ENCODE measurements at regions of chr9 and their contacts with region 1.

Region 1: DNA sequence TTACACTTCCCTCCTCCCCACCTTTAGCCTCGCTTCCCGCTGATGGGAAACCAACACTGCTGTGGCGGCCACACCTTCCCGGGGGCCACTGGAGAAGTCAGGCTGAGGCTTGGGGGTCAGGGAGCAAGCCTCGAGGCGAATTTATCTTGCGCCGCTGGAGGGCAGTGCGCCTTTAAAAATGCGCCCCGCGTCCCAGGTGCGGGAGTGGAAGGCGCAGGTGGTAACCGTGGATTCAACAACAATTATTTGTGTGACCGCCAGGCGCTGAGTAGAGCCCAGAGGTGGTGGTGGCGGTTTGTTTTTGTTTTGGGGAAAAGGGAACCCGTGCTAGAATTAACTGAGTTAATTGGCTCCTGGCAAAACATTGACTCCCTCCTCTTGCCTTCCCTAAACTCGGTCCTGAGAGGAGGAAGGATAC is 1.1 kb downstream of the CFAP77 start:
- DNase-seq: peak; percentile 40
- ATAC-seq: peak; percentile 25 to 31

Region 2: GRCh38 chr9:132507746-132508469 is 96.8 kb after region 1 on chr9:
- intact Hi-C with region 1: loop called in 1 of 2 experiments (anchors 10 kb)
- DNase-seq: peak; percentile 61
- ATAC-seq: peak; percentile 69 to 76

Region 3: DNA sequence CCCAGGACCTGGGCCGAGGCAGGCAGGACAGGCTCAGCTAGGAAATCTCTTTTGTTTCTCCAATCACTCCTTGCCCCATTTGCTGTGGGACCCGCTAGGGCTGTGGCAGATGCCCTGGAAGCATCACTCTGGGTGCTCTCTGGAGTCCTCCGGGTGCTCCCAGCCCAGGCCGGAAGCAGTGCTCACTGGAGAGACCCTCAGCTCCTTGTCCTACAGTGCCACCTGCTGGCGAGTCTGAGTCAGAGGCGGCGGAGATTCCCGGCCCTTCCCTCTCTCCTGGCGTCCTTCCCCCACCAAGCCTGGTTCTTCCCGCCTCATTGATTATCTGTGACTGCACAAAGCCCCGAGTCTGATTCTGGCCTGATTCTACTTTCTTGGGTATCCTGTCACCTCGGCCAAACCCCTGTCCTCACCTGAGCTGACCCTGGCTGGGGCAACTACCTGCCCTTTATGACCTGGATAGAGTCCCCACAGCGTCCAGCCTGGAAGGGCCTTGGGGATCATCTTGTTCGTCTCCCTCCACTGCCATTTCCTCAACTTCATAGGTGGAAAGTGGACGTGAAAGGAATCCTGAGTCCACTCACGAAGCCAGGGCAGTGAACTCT is 164.0 kb after region 1 on chr9:
- intact Hi-C with region 1: loop called (anchors 2 to 10 kb)
- DNase-seq: peak; percentile 71
- ATAC-seq: peak; percentile 79 to 86

Region 4: DNA sequence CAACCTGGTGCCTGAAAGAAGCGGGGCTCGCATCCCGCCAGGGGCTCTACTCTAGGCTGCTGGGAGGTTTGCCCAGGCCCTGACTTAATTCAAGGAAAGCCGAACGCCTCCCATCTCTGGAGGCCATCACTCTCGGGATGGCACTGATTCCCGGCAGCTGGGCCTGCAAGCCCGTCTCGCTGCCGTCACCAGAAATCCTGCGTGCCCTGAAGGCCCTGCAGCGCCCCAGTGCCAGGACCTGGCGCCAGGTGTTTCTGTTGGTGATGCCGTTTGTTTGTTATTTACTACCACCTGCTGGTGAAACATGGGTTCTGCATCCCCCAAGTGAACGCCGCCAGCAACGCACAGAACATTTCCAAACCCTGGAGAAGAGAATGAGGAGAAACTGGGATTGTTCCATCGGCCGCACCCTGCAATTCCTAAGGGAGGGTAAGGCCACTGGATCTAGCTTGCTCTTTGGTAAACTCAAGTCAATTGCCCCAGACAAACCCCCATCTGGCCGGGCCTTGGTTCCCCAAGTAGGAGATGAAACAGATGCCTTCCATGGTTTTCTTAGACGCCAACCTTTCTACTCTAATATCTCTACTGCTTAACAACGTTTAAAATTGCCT is 389.0 kb after region 1 on chr9:
- intact Hi-C with region 1: loop called in 1 of 2 experiments (anchors 2 kb)
- DNase-seq: peak; percentile 61
- ATAC-seq: peak; percentile 66 to 80

Region 5: DNA sequence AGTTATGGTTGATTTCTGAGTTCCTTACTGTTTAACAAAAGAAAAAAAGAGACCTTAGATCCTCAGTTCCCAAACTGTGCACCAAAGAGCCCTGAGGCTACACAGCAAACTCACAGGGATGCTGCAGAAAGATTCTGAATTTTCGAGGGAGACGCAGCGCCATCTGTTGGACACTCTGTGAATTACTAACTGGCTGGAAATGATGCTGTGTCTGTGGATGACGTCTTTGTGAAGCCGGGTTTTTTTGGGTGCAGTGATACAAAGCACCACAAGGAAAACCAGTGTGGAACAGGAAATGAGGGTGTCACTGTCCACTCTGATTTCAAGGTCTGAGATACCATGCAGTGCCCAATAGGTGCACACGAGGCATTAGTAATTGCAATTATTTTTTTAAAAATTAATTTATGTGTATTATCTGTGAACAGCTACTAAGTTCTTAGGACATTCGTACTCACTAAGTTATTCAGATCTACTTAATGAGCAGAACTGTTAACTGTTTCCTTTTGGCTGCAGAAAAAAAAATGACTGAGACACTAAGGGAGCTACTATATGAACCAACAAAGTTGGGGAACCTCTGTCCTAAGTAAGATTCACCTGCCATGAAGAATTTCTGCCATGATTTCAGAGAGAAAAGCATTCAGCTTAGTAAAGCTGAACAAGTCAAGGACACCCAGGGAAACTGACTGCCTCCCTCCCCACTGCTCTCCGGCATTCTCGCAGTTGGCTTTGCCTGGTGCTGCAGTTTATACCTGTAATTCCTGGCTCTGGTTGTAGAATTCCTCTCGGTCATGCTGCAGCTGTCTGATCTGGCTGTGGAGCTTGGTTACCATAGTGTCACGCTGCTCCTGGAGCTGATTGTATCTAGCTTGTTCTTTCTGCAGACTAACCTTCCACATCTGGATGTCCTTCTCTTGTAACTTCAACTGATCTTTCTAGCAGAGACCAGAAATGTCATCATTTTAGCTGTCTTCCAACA is 491.0 kb after region 1 on chr9:
- intact Hi-C with region 1: loop called in 1 of 2 experiments (anchors 2 kb)
- DNase-seq: peak; percentile 60
- ATAC-seq: peak; percentile 81 to 85

Measured in left cardiac atrium (tissue), 4 donors.